Activated naive CD4-positive, alpha-beta T cell treated with anti-CD3 and anti-CD28 coated beads for 36 hours (primary cell): ENCODE measurements at regions of chr19 and their contacts with region 1.

Region 1: DNA sequence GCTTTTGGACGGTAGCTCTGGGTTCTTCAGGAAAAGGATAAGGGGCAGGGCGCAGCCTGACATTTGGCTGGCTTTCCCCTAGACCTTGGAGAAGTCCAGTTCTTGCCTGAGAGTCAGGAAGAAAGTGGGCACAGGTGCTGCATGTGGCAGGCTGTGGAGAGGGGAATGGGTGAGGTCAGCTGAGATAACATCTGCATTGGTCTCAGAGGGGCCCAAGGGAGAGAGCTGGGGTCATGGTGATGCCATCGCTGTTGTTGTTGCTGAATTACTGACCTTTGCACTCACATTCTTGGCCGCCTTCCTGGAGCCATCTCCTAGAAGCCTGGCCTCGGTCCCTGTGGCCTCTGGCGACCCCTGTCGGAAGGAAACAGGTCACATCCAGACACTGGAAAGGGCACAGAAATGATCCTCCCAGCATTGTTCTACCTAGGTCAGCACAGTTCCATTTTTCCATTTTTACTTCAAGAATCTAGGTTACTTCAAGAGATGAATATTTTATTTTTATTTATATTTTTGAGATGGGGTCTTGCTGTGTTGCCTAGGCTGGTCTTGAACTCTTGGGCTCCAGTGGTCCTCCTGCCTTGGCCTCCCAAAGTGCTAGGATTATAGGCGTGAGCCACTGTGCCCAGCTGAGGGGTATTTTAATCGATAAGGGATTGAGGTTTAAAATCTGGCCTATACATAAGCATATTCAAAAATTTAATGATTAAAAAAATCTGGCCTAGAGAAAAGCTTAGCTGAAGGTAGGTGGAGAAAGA is 6.5 kb upstream of the LIPE start:
- DNase-seq: peak; percentile 83
- H3K4me3 Mint-ChIP-seq: no peak overlapping the region
- H3K27ac Mint-ChIP-seq: no peak overlapping the region
- H3K4me1 Mint-ChIP-seq: peaks cover 6% of the 10 kb centered on the region
- H3K27me3 Mint-ChIP-seq: no peaks in the 10 kb centered on the region

Region 2: DNA sequence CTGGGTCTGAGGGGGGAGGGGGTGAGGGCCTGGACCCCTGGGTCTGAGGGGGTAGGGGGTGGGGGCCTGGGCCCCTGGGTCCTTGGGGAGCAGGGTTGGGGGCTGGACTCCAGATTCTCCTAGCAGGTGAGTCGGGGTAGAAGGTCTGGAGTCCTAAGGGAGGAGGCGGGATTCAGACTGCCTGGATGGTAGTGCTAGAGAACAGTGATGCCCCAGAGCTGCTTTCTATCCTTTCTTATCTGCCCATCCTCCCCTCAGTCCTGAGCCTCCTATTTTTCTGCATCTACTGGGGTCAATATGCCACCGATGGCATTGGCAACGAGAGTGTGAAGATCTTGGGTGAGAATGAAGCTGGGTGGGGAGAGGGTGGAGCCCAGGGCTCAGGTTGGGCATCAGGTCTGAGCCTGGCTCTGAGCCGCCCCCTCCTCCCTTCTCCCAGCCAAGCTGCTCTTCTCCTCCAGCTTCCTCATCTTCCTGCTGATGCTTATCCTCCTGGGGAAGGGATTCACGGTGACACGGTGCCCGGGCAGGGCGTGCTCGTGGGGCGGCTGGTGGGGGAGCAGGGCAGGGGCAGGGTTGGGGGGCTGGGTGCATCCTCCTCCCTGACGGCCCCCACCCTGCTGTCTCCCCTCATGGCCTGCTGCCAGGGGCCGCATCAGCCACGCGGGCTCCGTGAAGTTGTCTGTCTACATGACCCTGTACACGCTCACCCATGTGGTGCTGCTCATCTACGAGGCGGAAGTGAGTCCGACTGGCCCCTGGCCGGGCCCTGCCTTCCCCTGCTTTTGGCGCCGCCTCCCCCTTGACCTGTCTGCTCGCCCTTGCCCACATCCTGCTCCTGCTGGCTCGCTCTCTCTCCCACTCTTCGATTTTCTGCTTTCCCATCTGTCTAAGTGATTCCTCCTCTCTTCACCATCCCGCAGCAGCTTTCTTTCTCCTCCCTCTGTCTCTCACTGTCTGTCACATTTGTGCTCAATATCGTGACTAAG is 117.2 kb before region 1 on chr19:
- CTCF ChIA-PET with region 1: interaction called, 10 read pairs
- intact Hi-C with region 1: no loop called
- DNase-seq: no peak
- H3K4me3 Mint-ChIP-seq: no peak overlapping the region
- H3K27ac Mint-ChIP-seq: no peak overlapping the region
- H3K4me1 Mint-ChIP-seq: peaks cover 9% of the 10 kb centered on the region
- H3K27me3 Mint-ChIP-seq: peaks cover 24% of the 10 kb centered on the region

Region 3: DNA sequence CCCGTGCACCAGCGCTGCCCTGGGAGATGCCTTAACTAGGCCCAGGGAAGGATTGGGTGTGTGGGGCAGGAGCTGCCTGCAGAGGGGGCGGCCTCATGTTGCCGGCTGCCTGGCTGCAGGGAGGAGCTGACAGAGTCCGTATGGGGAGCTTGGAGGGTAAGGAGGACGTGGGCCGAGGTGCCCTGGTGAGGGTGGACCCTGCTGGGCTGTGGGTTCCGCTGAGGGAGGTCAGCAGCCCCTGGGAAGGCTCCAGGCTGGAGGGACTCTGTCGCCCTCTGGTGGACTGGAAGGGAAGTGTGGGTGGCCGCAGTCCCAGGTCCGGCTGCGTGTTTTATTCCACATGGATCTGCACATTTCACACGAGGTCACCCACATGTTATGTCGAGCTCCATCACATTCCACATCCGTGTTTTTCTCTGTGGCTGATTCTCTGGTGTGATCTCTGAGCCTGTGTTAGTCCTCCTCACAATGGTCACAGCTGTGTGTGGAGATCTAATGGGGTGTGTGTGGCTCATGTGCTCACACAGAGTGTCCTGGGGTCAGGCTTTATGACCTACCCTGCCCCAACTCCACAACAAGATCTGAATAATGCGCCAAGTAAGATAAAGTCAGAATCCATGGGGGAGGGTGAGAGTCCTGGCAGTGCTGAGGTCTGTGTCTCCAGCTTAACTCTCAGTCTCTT is 162.8 kb after region 1 on chr19:
- CTCF ChIA-PET with region 1: no interaction called
- intact Hi-C with region 1: no loop called
- DNase-seq: peak; percentile 44
- H3K4me3 Mint-ChIP-seq: no peak overlapping the region
- H3K27ac Mint-ChIP-seq: no peak overlapping the region
- H3K4me1 Mint-ChIP-seq: no peaks in the 10 kb centered on the region
- H3K27me3 Mint-ChIP-seq: peaks cover 4% of the 10 kb centered on the region